CD4-positive, alpha-beta memory T cell (primary cell): ENCODE measurements at regions of chr1 and their contacts with region 1.

Region 1: GRCh38 chr1:27489910-27490741 is at the start of gene WASF2:
- DNase-seq: peak; percentile 97 to 98 (median 97)
- H3K4me3 ChIP-seq: peak within 1 kb of the TSS; percentile 44 to 100
- H3K4me3 Mint-ChIP-seq: peak within 1 kb of the TSS; percentile 95 to 100 (median 97)
- H3K27ac ChIP-seq: peak within 1 kb of the TSS; percentile 87
- H3K27ac Mint-ChIP-seq: peak within 1 kb of the TSS; percentile 97 to 99 (median 99)
- H3K4me1 ChIP-seq: peaks cover 32% of the 10 kb centered on the region
- H3K4me1 Mint-ChIP-seq: peaks cover 18 to 45% (median 26%) of the 10 kb centered on the region in 4 donors
- H3K27me3 ChIP-seq: no peaks in the 10 kb centered on the region
- H3K27me3 Mint-ChIP-seq: peaks cover 0 to 3% of the 10 kb centered on the region in 2 donors
- total RNA-seq, gene WASF2: 163 to 164 TPM

Region 2: GRCh38 chr1:26972390-26972789 is 517.7 kb before region 1 on chr1:
- CTCF ChIA-PET with region 1: no interaction called
- POLR2A ChIA-PET with region 1: no interaction called
- intact Hi-C with region 1: no loop called
- DNase-seq: no peak
- H3K4me3 ChIP-seq: no peak overlapping the region
- H3K4me3 Mint-ChIP-seq: no peak overlapping the region
- H3K27ac ChIP-seq: no peak overlapping the region
- H3K27ac Mint-ChIP-seq: no peak overlapping the region
- H3K4me1 ChIP-seq: no peaks in the 10 kb centered on the region
- H3K4me1 Mint-ChIP-seq: no peaks in the 10 kb centered on the region
- H3K27me3 ChIP-seq: no peaks in the 10 kb centered on the region
- H3K27me3 Mint-ChIP-seq: peaks cover 7 to 8% of the 10 kb centered on the region in 2 donors

Region 3: DNA sequence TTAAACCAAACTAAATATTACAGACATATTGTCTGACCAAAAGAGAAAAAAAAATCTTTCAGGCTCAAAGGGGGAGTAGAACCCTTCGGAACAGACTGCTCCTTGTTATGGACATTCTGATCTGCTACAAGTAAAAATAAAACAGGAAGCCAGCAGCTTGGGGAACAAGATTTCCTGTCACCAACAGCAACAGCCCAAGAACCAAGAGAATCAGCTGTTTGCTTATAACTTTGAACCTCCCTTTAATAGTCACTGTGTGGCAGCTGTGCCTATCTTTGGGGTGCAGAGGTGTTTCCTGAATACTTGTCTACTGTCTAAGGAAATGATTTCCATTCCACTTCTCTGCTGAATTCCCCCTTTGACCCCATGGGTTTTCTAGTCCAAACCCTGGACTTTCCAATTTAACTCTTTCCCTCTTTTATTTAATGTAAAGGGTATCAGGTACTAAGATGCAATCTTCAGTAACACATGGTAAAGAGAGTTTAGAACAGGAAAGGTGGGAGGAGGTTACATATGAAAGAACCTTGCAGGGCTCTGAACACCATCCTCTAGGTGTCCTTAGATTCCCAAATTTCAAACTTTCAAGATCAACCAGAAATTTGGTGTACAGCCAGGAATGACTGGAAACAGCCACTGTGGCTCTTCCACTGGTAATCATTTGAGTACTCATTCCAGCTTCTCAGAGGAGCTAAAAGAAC is 59.1 kb before region 1 on chr1:
- CTCF ChIA-PET with region 1: interaction called, 9 read pairs
- POLR2A ChIA-PET with region 1: interaction called, 18 read pairs
- intact Hi-C with region 1: loop called (anchors 1 kb)
- DNase-seq: peak in 4 of 5 donors; percentile 46 to 61 (median 56)
- H3K4me3 ChIP-seq: peak overlapping the region in 1 of 2 donors; percentile 5
- H3K4me3 Mint-ChIP-seq: peak overlapping the region; percentile 53 to 88 (median 77)
- H3K27ac ChIP-seq: peak overlapping the region; percentile 24
- H3K27ac Mint-ChIP-seq: peak overlapping the region; percentile 64 to 94 (median 87)
- H3K4me1 ChIP-seq: peaks cover 98% of the 10 kb centered on the region
- H3K4me1 Mint-ChIP-seq: peaks cover 56 to 86% (median 73%) of the 10 kb centered on the region in 4 donors
- H3K27me3 ChIP-seq: no peaks in the 10 kb centered on the region
- H3K27me3 Mint-ChIP-seq: no peaks in the 10 kb centered on the region

Region 4: DNA sequence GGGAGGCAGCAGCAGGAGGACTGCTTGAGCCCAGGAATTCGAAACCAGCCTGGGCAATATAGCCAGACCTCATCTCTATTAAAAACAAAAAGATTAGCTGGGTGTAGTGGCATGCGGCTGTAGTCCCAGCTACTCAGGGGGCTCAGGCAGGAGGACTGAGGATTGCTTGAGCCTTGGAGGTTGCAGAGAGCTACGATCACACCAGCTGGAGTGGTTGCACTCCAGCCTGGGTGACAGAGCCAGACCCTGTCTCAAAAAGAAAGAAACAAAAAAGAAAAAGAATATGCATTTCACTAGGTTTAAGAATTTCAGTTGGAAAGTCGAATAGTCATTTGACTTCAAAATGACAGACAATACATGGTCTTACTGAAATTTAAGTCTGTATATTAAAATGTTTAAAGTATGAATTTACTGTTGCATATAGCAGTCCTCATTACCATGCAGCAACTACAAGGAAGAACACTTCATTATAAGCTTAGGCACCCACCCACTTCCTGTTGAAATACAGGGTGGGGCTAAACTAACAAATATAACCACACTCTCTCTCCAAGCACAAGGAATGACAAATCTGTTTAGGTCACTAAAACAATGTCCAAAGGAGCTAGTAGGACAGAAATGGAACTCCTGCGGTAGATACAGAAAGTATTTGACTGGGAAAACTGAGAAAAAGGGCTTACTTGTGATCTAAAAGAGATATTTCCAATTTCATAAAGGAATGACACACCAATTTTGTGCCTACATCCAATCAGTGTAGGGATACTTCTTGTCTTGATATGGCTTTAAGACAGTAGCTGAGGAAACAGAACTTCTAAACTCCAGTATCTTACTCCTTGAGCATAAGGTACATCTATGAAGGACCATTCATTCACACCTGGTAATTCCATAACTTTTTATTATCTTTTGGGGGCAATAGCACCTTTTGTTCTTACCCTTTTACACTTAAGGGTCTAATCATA is 53.6 kb before region 1 on chr1:
- CTCF ChIA-PET with region 1: interaction called, 3 read pairs
- POLR2A ChIA-PET with region 1: interaction called, 18 read pairs
- intact Hi-C with region 1: loop called (anchors 1 kb)
- DNase-seq: peak; percentile 39 to 59 (median 43)
- H3K4me3 ChIP-seq: peak overlapping the region; percentile 25 to 45
- H3K4me3 Mint-ChIP-seq: peak overlapping the region; percentile 59 to 85 (median 78)
- H3K27ac ChIP-seq: peak overlapping the region; percentile 40
- H3K27ac Mint-ChIP-seq: peak overlapping the region; percentile 76 to 97 (median 90)
- H3K4me1 ChIP-seq: peaks cover 85% of the 10 kb centered on the region
- H3K4me1 Mint-ChIP-seq: peaks cover 56 to 81% (median 68%) of the 10 kb centered on the region in 4 donors
- H3K27me3 ChIP-seq: no peaks in the 10 kb centered on the region
- H3K27me3 Mint-ChIP-seq: no peaks in the 10 kb centered on the region

Region 5: DNA sequence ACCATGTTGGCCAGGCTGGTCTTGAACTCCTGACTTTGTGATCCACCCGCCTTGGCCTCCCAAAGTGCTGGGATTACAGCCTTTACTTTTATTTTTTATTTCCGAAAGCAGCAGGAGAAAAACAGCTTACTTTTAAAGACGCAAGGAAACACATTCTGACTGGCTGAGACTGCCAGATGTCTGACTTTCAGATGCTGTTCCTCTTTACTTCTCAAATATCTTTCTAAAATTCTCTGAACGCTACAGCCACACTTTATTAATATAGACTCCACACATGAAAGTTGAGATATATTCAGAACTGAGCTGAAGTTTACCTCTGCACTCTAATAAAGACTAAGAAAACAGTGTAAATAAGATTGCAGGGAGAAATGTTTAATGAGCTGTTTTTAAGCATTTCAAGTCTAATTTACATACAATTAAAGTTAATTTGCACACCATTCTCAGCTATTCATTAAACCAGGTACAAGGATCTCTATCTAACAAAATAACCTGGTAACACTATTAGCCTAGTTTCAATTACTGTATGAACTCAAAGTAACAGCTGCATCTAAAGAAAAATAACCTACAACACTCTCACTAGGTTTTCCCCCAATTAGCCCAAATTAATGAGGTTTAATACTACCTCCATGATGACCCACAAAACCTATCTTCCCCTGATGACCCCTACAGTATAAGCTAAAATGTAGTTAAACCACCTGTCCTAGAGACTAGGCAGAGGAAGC is 25.0 kb before region 1 on chr1:
- CTCF ChIA-PET with region 1: no interaction called
- POLR2A ChIA-PET with region 1: interaction called, 12 read pairs
- intact Hi-C with region 1: no loop called
- DNase-seq: no peak
- H3K4me3 ChIP-seq: no peak overlapping the region
- H3K4me3 Mint-ChIP-seq: no peak overlapping the region
- H3K27ac ChIP-seq: no peak overlapping the region
- H3K27ac Mint-ChIP-seq: peak overlapping the region in 5 of 7 donors; percentile 27 to 85 (median 66)
- H3K4me1 ChIP-seq: peaks cover 44% of the 10 kb centered on the region
- H3K4me1 Mint-ChIP-seq: peaks cover 33 to 63% (median 45%) of the 10 kb centered on the region in 4 donors
- H3K27me3 ChIP-seq: no peaks in the 10 kb centered on the region
- H3K27me3 Mint-ChIP-seq: no peaks in the 10 kb centered on the region